Head of caudate nucleus (tissue), 42 donors: ENCODE measurements at regions of chr15 and their contacts with region 1.

Region 1: DNA sequence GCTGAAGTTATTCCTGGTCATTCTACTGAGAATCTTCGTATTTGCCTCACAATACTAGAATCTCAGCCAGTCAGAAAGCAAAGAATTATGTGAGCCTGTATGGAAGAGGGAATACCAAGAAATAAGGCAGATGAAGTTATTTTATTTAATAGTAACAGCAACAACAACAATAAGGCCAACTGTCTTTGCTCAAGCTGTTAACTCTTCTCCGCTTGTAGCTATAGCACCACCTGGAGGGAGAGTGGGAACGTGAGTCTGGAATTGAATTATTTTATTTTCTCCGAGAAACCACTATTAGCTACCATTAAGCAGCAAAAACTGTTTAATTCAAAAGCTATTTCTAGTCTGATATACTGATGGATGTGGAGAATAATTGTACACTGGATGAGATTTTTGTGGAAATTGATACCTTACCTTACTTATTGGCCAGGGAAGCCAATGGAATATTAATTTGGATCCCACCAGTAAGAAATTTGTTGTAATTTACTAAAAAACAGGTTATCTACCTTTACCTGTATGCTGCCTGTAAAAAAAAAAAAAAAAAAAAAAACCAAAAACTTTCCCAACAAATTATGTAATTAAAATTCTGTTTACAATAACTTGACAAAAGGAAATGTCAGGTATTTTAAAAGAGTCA is 50.1 kb downstream of the CALML4 start:
- DNase-seq: peak in 32 of 42 donors; percentile 11 to 77 (median 40)

Region 2: DNA sequence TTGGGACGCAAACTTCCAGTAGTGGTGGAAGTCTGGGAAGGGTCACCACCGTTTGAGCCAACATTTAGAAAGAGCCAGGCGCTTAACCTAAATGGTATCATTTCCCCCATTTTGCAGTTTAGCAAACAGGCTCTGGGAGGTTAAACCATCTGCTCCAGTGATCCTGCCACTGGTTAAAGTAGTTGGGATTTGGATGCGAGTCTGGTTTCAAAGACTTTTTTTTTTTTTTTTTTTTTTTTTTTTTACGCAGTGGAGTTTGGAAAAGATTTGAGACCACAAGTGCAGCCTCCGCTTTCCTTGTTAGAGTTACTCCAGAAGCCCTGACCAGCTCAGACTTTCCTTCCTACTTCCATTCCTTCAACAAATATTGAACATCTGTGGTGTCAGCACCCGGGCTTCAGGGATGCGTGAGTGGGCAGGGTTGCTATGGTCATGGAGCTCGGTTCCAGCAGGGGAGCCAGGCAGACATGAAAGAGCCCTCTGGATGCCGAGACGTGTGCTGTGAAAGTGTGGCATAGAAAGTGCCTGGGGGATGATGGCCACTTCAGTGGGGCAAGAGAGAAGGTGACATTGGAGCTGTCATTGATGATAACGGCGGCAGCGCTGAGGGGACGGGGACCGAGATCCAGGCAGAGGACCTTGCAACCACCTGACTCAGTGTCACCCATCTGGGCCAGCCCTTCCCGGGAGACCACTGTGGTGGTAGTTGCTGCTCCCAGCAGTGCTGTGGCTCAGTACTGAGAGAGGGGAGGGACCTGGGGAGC is 314.1 kb before region 1 on chr15:
- intact Hi-C with region 1: no loop called
- DNase-seq: peak in 29 of 42 donors; percentile 14 to 65 (median 34)

Region 3: GRCh38 chr15:67863442-67863987 is 291.5 kb before region 1 on chr15:
- intact Hi-C with region 1: loop called (anchors 2 kb)
- DNase-seq: peak; percentile 49 to 91 (median 80)